ENCODE measurements at regions of chr17 and their contacts with region 1.

Region 1: GRCh38 chr17:63621766-63622519 is at the start of gene MAP3K3:
- DNase-seq: peak; percentile 87 to 99 (median 97)
- ATAC-seq: peak; percentile 89 to 90 (median 89)
- H3K4me3 ChIP-seq: peak within 1 kb of the TSS; percentile 73 to 80
- H3K4me3 Mint-ChIP-seq: peak within 1 kb of the TSS; percentile 97 to 99 (median 99)
- H3K27ac ChIP-seq: peak within 1 kb of the TSS; percentile 67
- H3K27ac Mint-ChIP-seq: peak within 1 kb of the TSS; percentile 87 to 96
- H3K4me1 ChIP-seq: peaks cover 15 to 26% of the 10 kb centered on the region in 2 experiments
- H3K4me1 Mint-ChIP-seq: peaks cover 42 to 45% (median 43%) of the 10 kb centered on the region in 3 donors
- H3K27me3 ChIP-seq: no peaks in the 10 kb centered on the region
- H3K27me3 Mint-ChIP-seq: no peaks in the 10 kb centered on the region
- total RNA-seq, gene MAP3K3: 71.0 to 91.1 (median 85.4) TPM

Region 2: DNA sequence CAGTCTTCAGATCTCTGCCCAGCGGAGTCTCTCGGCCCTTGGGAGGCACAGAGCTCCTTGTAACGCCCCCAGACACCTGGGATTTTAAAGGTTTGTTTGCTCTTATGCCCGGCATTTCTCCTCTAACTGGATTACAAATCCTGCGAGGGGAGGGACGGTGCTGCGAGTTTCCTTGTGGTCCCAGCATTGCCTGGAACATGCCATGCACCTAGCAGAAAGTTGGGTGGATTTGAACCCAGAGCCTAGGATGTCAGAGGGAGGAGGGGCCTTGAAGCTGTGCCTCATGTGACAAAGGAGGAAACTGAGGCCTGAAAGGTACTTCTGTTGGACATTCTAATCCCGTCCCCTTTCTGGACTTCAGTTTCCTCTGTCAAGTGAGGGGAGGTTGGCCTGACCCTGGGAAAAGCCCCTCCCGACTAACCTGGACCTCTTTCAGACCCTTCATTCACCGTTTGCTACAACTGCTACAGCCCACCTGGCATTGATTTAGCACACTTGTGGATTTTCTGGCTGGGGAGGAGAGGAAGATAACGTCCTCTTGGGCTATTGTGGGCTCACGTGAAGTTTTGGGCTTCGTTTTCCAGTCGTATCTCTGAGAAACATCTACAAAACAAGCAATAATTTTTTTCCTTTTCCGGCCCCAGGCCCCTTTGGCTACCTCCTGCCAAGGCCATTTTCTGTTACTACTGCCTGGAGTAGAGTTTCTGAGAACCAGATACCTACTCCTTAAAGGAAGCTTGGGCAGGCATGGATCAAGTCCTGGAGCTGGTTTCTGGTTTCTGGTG is 963.6 kb before region 1 on chr17:
- CTCF ChIA-PET with region 1: no interaction called
- POLR2A ChIA-PET with region 1: interaction called in 1 of 2 experiments, 10 read pairs
- DNase-seq: no peak
- ATAC-seq: no peak
- H3K4me3 ChIP-seq: no peak overlapping the region
- H3K4me3 Mint-ChIP-seq: no peak overlapping the region
- H3K27ac ChIP-seq: no peak overlapping the region
- H3K27ac Mint-ChIP-seq: no peak overlapping the region
- H3K4me1 ChIP-seq: peaks cover 2 to 8% of the 10 kb centered on the region in 2 experiments
- H3K4me1 Mint-ChIP-seq: peaks cover 5 to 9% (median 8%) of the 10 kb centered on the region in 3 donors
- H3K27me3 ChIP-seq: peaks cover 0 to 25% of the 10 kb centered on the region in 2 experiments
- H3K27me3 Mint-ChIP-seq: peaks cover 0 to 3% of the 10 kb centered on the region in 2 donors

Region 3: DNA sequence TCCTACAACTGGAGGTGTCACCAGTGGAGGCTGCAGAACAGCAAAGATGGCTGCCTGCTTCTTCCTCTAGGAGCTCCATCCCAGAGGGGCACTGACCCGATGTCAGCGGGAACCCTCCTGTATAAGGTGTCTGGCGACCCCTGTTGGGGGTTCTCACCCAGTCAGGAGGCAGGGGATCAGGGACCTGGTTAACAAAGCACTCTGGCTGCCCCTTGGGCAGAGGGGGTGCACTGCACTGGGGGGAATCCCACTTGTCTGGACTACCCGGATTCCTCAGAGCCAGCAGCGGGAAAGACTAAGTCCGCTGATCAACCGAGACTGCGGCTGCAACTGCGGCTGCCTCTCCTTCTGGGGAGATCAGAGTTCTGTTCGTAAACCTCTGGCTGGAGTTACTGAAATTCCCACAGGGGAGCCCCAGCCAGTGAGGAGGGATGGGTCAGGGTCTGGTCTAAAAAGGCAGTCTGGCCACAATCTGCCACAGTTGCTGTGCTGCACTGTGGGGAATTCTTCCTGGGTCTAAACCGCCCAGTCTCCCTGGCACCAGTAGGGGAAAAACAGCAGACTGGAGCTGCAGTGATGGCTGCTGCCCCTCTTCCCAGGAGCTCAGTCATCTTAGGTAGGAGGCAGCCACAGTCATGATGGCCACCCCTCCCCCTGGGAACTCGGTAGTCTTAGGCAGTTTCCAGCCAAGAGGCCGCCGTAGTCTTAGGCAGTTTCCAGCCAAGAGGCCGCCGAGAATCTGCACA is 389.2 kb before region 1 on chr17:
- CTCF ChIA-PET with region 1: no interaction called
- POLR2A ChIA-PET with region 1: no interaction called
- DNase-seq: no peak
- ATAC-seq: no peak
- H3K4me3 ChIP-seq: no peak overlapping the region
- H3K4me3 Mint-ChIP-seq: no peak overlapping the region
- H3K27ac ChIP-seq: no peak overlapping the region
- H3K27ac Mint-ChIP-seq: no peak overlapping the region
- H3K4me1 ChIP-seq: no peaks in the 10 kb centered on the region
- H3K4me1 Mint-ChIP-seq: peaks cover 0 to 5% (median 0%) of the 10 kb centered on the region in 3 donors
- H3K27me3 ChIP-seq: no peaks in the 10 kb centered on the region
- H3K27me3 Mint-ChIP-seq: no peaks in the 10 kb centered on the region

Region 4: DNA sequence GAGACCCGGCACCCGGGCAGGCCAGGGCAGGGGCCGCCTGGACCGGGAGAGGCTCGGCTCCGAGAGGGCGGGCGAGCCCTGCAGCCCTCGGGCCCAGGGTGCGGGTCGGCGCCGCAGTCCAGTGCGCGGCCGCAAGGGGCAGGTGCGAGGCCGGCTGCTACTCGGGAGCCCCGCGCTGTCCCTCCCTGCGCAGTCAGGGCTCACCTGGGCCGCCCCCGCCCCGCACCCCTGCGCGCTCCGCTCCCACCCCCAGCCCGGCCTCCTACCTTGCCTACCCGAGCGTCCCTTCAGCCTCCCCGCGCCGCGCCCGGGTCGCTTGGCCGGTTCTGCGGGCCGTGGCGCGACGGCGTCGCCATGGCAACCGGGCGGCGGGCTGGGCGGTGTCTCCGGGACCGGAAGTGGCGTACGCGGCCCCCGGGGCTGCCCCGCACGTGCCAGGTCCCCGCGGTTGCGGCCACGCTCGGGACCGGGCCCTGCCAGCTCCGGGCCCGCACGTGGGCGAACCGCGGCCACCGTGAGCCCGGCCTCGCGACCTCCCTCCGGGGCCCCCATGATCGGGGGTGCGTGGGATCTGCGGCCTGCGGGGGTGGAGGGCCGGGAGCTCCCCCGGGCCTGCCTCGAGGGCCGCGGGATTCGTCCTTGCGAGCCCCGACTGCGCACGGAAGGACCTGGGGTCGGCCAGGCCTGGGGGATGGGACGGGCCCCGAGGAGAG is 175.8 kb before region 1 on chr17 and contains the start of gene CYB561:
- CTCF ChIA-PET with region 1: interaction called in 1 of 2 experiments, 13 read pairs
- POLR2A ChIA-PET with region 1: no interaction called
- DNase-seq: peak in 34 of 35 experiments; percentile 27 to 83 (median 46)
- ATAC-seq: peak; percentile 61 to 75 (median 70)
- H3K4me3 ChIP-seq: peak within 1 kb of the TSS; percentile 71 to 80
- H3K4me3 Mint-ChIP-seq: peak within 1 kb of the TSS; percentile 70 to 82 (median 76)
- H3K27ac ChIP-seq: peak within 1 kb of the TSS; percentile 96
- H3K27ac Mint-ChIP-seq: peak within 1 kb of the TSS; percentile 92 to 95
- H3K4me1 ChIP-seq: peaks cover 12 to 43% of the 10 kb centered on the region in 2 experiments
- H3K4me1 Mint-ChIP-seq: peaks cover 26 to 50% (median 27%) of the 10 kb centered on the region in 3 donors
- H3K27me3 ChIP-seq: peaks cover 2 to 15% of the 10 kb centered on the region in 2 experiments
- H3K27me3 Mint-ChIP-seq: no peaks in the 10 kb centered on the region
- total RNA-seq, gene CYB561: 15.5 to 64.1 (median 34.0) TPM

Region 5: GRCh38 chr17:63685041-63685440 is 63.1 kb after region 1 on chr17:
- CTCF ChIA-PET with region 1: no interaction called
- POLR2A ChIA-PET with region 1: interaction called in 1 of 2 experiments, 10 read pairs
- DNase-seq: no peak
- ATAC-seq: no peak
- H3K4me3 ChIP-seq: no peak overlapping the region
- H3K4me3 Mint-ChIP-seq: no peak overlapping the region
- H3K27ac ChIP-seq: no peak overlapping the region
- H3K27ac Mint-ChIP-seq: peak overlapping the region in 1 of 2 donors; percentile 16
- H3K4me1 ChIP-seq: no peaks in the 10 kb centered on the region
- H3K4me1 Mint-ChIP-seq: peaks cover 0 to 4% (median 1%) of the 10 kb centered on the region in 3 donors
- H3K27me3 ChIP-seq: no peaks in the 10 kb centered on the region
- H3K27me3 Mint-ChIP-seq: no peaks in the 10 kb centered on the region

Region 6: GRCh38 chr17:64466019-64466685 is 844.2 kb after region 1 on chr17:
- CTCF ChIA-PET with region 1: interaction called in 1 of 2 experiments, 14 read pairs
- POLR2A ChIA-PET with region 1: no interaction called
- DNase-seq: no peak
- ATAC-seq: no peak
- H3K4me3 ChIP-seq: no peak overlapping the region
- H3K4me3 Mint-ChIP-seq: no peak overlapping the region
- H3K27ac ChIP-seq: no peak overlapping the region
- H3K27ac Mint-ChIP-seq: no peak overlapping the region
- H3K4me1 ChIP-seq: no peaks in the 10 kb centered on the region
- H3K4me1 Mint-ChIP-seq: no peaks in the 10 kb centered on the region
- H3K27me3 ChIP-seq: peaks cover 0 to 13% of the 10 kb centered on the region in 2 experiments
- H3K27me3 Mint-ChIP-seq: peaks cover 0 to 8% of the 10 kb centered on the region in 2 donors

Measured in T-cell (primary cell).